ENCODE measurements at regions of chr11 and their contacts with region 1.

Region 1: GRCh38 chr11:70610566-70611565 is 212.5 kb downstream of the CTTN start:
- DNase-seq: no peak
- H3K4me3 ChIP-seq: peak overlapping the region in 1 of 3 donors; percentile 15
- H3K27ac ChIP-seq: no peak overlapping the region
- H3K4me1 ChIP-seq: peaks cover 0 to 10% of the 10 kb centered on the region in 2 donors
- H3K27me3 ChIP-seq: no peaks in the 10 kb centered on the region
- CTCF ChIP-seq: no peak
- POLR2A ChIP-seq: no peak

Region 2: DNA sequence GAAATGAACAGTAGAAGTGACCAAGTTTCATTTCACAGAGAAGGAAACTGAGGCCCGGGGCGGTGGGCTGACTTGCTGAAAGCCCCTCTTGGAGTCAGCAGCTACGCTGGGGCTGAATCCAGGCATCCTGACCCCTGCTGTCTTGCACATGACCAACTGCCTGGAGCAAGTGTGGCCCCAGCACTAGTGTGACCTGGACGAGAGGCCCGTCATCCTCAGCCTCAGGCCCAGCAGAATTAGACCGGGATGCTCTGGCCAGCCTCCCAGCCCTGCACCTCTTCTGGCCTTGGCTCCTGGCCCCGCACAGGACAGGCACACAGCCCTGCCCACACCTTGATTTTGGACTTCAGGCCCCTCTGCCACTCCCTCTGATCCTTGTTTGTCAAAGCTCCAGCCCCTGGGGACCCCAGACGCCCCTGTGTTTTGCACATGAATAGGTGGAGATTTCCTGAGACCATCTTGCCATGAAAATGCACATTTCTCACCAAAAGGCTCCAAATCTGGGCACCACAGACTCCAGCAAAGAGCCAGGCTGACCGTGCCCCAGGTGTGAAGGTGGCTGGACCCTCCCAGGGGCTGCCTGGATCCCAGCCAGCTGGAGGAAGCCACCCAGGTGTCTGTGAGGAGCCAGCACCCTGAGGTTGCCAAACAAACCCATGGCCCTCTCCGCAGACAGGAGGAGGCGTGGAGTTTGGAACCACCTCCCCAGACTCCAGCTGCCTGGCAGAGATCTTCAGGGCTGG is 860.6 kb before region 1 on chr11:
- intact Hi-C with region 1: loop called (anchors 5 kb)
- DNase-seq: no peak
- H3K4me3 ChIP-seq: no peak overlapping the region
- H3K27ac ChIP-seq: no peak overlapping the region
- H3K4me1 ChIP-seq: no peaks in the 10 kb centered on the region
- H3K27me3 ChIP-seq: peaks cover 0 to 7% of the 10 kb centered on the region in 2 donors
- CTCF ChIP-seq: no peak
- POLR2A ChIP-seq: no peak

Measured in breast epithelium (tissue), 4 donors.